ENCODE measurements at regions of chr11 and their contacts with region 1.

Region 1: GRCh38 chr11:59542142-59542810 is 30.9 kb downstream of the OR4D9 start:
- DNase-seq: no peak
- H3K4me3 ChIP-seq: no peak overlapping the region
- H3K27ac ChIP-seq: no peak overlapping the region
- H3K4me1 ChIP-seq: peaks cover 0 to 8% (median 6%) of the 10 kb centered on the region in 4 donors
- H3K27me3 ChIP-seq: no peaks in the 10 kb centered on the region
- CTCF ChIP-seq: no peak
- EP300 ChIP-seq: no peak
- POLR2A ChIP-seq: no peak

Region 2: DNA sequence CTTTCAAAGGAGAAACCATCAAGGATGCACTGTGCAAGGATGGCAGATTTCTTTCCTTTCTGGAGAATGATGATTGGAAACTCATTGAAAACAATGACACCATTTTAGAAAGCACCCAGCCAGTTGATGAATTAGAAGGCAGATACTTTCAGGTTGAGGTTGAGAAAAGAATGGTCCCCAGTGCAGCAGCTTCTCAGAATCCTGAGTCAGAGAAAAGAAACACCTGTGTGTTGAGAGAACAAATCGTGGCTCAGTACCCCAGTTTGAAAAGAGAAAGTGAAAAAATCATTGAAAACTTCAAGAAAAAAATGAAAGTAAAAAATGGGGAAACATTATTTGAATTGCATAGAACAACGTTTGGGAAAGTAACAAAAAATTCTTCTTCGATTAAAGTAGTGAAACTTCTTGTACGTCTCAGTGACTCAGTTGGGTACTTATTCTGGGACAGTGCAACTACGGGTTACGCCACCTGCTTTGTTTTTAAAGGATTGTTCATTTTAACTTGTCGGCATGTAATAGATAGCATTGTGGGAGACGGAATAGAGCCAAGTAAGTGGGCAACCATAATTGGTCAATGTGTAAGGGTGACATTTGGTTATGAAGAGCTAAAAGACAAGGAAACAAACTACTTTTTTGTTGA is 389.8 kb before region 1 on chr11:
- intact Hi-C with region 1: no loop called
- DNase-seq: no peak
- H3K4me3 ChIP-seq: no peak overlapping the region
- H3K27ac ChIP-seq: no peak overlapping the region
- H3K4me1 ChIP-seq: no peaks in the 10 kb centered on the region
- H3K27me3 ChIP-seq: no peaks in the 10 kb centered on the region
- CTCF ChIP-seq: no peak
- EP300 ChIP-seq: no peak
- POLR2A ChIP-seq: no peak

Region 3: GRCh38 chr11:59680287-59681154 is 138.2 kb after region 1 on chr11:
- intact Hi-C with region 1: loop called (anchors 1 kb)
- DNase-seq: peak; percentile 83
- H3K4me3 ChIP-seq: no peak overlapping the region
- H3K27ac ChIP-seq: no peak overlapping the region
- H3K4me1 ChIP-seq: no peaks in the 10 kb centered on the region
- H3K27me3 ChIP-seq: no peaks in the 10 kb centered on the region
- CTCF ChIP-seq: peak; percentile 58 to 73 (median 64)
- EP300 ChIP-seq: no peak
- POLR2A ChIP-seq: no peak